Astrocyte of the cerebellum (primary cell): ENCODE measurements at regions of chr11 and their contacts with region 1.

Region 1: GRCh38 chr11:2180775-2181370 is 9.3 kb upstream of the TH start:
- DNase-seq: no peak
- H3K4me3 ChIP-seq: no peak overlapping the region
- CTCF ChIP-seq: no peak

Region 2: GRCh38 chr11:2151500-2152257 is 29.2 kb before region 1 on chr11:
- in situ Hi-C with region 1: no loop called
- DNase-seq: peak; percentile 53
- H3K4me3 ChIP-seq: no peak overlapping the region
- CTCF ChIP-seq: peak; percentile 77

Region 3: DNA sequence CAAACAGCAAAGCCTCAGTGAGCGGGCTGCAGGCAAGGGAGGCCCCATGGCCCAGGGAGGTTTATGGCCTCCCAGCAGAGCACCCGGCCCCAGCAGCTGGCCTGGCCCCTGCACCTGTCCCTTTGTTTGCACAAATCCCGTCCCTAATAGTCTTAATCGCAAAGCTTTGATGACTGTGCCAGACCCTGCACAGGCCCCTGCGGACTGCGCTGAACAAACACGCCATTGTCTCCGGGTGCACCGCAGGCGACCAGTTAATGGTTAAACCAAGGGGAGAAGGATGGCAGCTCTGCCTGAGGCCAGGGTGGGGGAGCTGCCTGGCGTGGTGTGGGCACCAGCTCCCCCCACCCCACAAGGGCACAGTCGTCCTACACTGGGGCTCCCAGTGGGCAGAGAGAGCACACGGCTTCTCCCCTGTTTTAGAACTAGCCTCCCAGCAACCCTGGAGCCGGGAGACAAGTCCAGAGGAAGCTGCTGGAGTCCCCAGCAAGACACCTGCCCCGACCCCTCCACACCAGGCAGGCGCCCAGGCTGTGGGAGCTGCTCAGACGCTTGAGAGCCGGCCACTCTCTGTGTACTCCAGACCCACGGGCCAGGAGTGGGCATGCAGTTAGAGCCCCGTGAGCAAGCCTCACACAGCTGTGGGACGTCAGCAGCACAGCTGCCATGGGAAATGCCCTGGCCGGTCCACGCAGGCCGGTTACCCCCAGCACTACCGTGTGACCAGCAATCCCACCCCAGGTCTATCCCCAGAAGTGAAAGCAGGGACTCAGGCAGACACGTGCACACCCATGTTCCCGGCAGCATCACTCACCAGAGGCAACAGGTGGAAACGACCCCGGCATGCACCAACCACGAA is 30.5 kb after region 1 on chr11:
- in situ Hi-C with region 1: loop called (anchors 5 kb)
- DNase-seq: no peak
- H3K4me3 ChIP-seq: no peak overlapping the region
- CTCF ChIP-seq: no peak

Region 4: DNA sequence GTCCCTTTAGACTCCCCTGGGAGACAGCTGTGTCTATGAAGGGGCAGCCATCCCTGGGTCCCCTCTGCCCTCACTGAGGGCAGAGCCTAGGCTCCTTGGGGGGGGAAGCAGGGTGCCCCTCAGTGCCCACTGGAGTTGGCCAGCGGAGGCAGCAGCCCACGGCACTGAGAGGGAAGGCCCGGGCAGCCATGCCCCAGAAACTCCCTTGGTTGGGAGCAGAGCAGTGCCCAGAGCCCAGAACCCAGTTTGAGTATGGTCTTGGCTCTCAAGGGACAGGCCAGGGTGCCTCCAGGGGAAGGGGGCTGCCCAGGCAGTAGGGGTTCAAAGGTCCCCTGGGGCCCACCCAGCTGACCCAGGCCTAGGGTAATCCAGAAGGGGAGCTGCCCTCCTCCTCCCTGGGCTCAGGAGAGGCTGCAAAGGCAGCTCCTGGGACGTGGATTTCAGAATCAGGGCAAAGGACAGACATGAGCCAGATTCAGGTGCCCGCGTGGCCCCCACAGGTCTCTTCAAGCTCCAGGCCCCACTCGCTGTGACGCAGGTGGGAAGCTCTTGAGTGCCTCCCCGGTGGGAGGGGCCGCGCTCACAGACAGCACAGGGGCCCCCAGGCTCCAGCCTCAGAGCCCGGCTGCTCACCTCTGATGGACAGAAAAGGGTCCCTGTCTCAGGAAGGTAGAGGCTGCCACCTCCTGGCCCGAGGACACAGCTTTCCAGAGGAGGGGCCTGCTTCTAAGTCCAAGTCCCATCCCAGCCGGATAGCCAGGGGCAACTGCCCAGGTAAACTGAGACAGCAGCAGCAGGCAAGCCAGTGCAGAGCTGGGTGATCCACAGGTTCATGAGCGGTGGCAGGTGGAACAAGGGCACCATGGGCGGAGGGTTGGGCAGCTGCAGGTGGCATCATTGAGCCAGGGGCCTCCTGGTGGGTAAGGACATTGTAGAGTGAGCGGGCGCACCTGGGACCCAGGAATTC is 118.2 kb after region 1 on chr11:
- in situ Hi-C with region 1: loop called (anchors 5 kb)
- DNase-seq: no peak
- H3K4me3 ChIP-seq: no peak overlapping the region
- CTCF ChIP-seq: peak; percentile 25

Region 5: GRCh38 chr11:2409611-2410468 is 229.0 kb after region 1 on chr11:
- in situ Hi-C with region 1: loop called (anchors 5 kb)
- DNase-seq: no peak
- H3K4me3 ChIP-seq: no peak overlapping the region
- CTCF ChIP-seq: no peak